ENCODE measurements at regions of chr7 and their contacts with region 1.

Region 1: GRCh38 chr7:20778063-20778721 is 8.5 kb downstream of the SP8 start:
- DNase-seq: peak in 2 of 3 donors; percentile 44 to 55
- ATAC-seq: peak; percentile 89
- H3K4me3 ChIP-seq: no peak overlapping the region
- H3K4me1 ChIP-seq: peaks cover 5% of the 10 kb centered on the region
- CTCF ChIP-seq: peak; percentile 43

Region 2: GRCh38 chr7:21253740-21254687 is 475.8 kb after region 1 on chr7:
- intact Hi-C with region 1: loop called in 1 of 2 experiments (anchors 5 kb)
- DNase-seq: peak in 2 of 3 donors; percentile 47 to 84
- ATAC-seq: peak; percentile 58
- H3K4me3 ChIP-seq: no peak overlapping the region
- H3K4me1 ChIP-seq: no peaks in the 10 kb centered on the region
- CTCF ChIP-seq: peak; percentile 27